ENCODE measurements at regions of chr16 and their contacts with region 1.

Region 1: GRCh38 chr16:17467923-17468540 is 2.7 kb downstream of the XYLT1 start:
- DNase-seq: peak; percentile 41 to 71 (median 66)
- ATAC-seq: peak in 3 of 4 donors; percentile 72 to 79 (median 76)
- H3K4me3 ChIP-seq: no peak overlapping the region
- H3K27ac ChIP-seq: no peak overlapping the region
- H3K4me1 ChIP-seq: peaks cover 0 to 7% (median 0%) of the 10 kb centered on the region in 3 donors
- H3K27me3 ChIP-seq: no peaks in the 10 kb centered on the region
- CTCF ChIP-seq: peak in 3 of 4 donors; percentile 32 to 53 (median 52)

Region 2: GRCh38 chr16:17194190-17194780 is 273.7 kb before region 1 on chr16:
- intact Hi-C with region 1: loop called in 1 of 3 experiments (anchors 10 kb)
- DNase-seq: peak; percentile 23 to 83 (median 66)
- ATAC-seq: peak; percentile 69 to 95 (median 78)
- H3K4me3 ChIP-seq: no peak overlapping the region
- H3K27ac ChIP-seq: no peak overlapping the region
- H3K4me1 ChIP-seq: no peaks in the 10 kb centered on the region
- H3K27me3 ChIP-seq: no peaks in the 10 kb centered on the region
- CTCF ChIP-seq: peak; percentile 62 to 83 (median 82)

Region 3: DNA sequence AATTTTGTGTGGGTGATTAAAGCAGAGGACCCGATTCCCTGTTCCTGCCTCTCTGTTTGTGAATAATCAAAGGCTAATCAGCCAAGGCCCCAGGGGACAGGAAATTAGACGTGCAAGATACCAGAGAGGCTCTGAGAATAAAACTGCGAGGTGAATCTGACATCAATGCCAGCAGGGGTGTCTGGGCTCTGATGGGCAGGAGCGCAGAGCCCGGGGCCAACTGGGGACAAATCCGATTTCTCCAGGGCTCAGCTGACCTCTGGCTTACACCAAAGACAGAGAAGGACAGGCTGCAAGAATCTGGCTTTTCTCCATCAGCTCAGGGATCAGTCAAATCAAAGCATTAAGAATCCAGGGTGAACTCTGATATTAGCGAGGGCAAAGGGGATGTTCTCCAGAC is 171.6 kb before region 1 on chr16:
- intact Hi-C with region 1: loop called in 1 of 3 experiments (anchors 10 kb)
- DNase-seq: no peak
- ATAC-seq: no peak
- H3K4me3 ChIP-seq: no peak overlapping the region
- H3K27ac ChIP-seq: no peak overlapping the region
- H3K4me1 ChIP-seq: peaks cover 1 to 19% (median 18%) of the 10 kb centered on the region in 3 donors
- H3K27me3 ChIP-seq: no peaks in the 10 kb centered on the region
- CTCF ChIP-seq: no peak

Measured in pancreas (tissue), 10 donors.